Gastrocnemius medialis (tissue), 4 donors: ENCODE measurements at regions of chr18 and their contacts with region 1.

Region 1: DNA sequence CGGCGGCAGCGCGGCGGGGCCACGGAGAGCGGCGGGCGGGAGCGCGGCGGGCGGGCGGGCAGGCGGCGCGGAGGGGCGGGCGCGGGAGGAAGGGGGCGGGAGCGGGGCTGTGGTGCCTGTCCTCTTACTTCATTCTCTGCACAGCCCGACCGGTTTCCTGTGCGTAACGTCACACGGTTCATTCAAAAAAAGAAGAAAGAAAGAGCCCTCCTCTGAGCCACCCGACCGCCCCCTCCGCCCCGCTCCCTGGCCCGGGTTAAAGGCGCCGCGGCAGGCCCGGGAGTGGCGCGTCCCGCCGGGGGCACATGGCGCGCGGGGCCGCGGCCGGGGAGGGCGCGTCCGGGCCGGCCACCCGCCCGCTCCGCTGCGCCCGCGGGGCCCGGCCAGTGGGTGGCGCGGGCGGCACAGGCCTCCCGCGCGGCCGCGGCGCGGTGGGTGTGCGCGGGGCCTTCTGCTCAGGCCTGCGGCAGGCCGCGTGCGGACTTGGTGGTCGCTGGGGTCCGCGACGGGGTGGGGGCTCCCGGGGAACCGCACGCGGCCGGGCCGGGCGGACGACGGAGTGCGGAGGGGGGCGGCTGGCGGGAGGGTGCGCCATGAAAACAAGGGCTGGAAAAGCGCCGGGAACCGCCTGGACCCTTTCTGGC is 599 bp upstream of the BCL2 start:
- DNase-seq: peak; percentile 74 to 81
- ATAC-seq: peak; percentile 77 to 78
- H3K4me3 ChIP-seq: peak overlapping the region; percentile 49 to 81 (median 64)
- H3K27ac ChIP-seq: peak overlapping the region; percentile 83 to 86 (median 84)
- H3K4me1 ChIP-seq: peaks cover 10 to 32% of the 10 kb centered on the region in 2 donors
- H3K27me3 ChIP-seq: no peaks in the 10 kb centered on the region
- CTCF ChIP-seq: peak in 2 of 5 experiments; percentile 29 to 31
- POLR2A ChIP-seq: peak in 1 of 2 donors; percentile 28

Region 2: GRCh38 chr18:63025251-63026090 is 294.7 kb before region 1 on chr18:
- in situ Hi-C with region 1: no loop called
- intact Hi-C with region 1: loop called (anchors 2 kb)
- DNase-seq: no peak
- ATAC-seq: peak; percentile 51 to 52
- H3K4me3 ChIP-seq: no peak overlapping the region
- H3K27ac ChIP-seq: no peak overlapping the region
- H3K4me1 ChIP-seq: no peaks in the 10 kb centered on the region
- H3K27me3 ChIP-seq: no peaks in the 10 kb centered on the region
- CTCF ChIP-seq: peak in 3 of 5 experiments; percentile 13 to 51 (median 39)
- POLR2A ChIP-seq: no peak

Region 3: GRCh38 chr18:63192885-63193349 is 127.3 kb before region 1 on chr18:
- in situ Hi-C with region 1: no loop called
- intact Hi-C with region 1: loop called (anchors 5 kb)
- DNase-seq: peak; percentile 28 to 55
- ATAC-seq: peak; percentile 97 to 98
- H3K4me3 ChIP-seq: no peak overlapping the region
- H3K27ac ChIP-seq: peak overlapping the region; percentile 81 to 90 (median 85)
- H3K4me1 ChIP-seq: peaks cover 29 to 41% of the 10 kb centered on the region in 2 donors
- H3K27me3 ChIP-seq: no peaks in the 10 kb centered on the region
- CTCF ChIP-seq: no peak
- POLR2A ChIP-seq: no peak

Region 4: GRCh38 chr18:63267975-63268721 is 52.0 kb before region 1 on chr18:
- in situ Hi-C with region 1: loop called in 1 of 4 experiments (anchors 10 kb)
- intact Hi-C with region 1: loop called (anchors 2 kb)
- DNase-seq: no peak
- ATAC-seq: no peak
- H3K4me3 ChIP-seq: no peak overlapping the region
- H3K27ac ChIP-seq: no peak overlapping the region
- H3K4me1 ChIP-seq: peaks cover 44 to 52% of the 10 kb centered on the region in 2 donors
- H3K27me3 ChIP-seq: no peaks in the 10 kb centered on the region
- CTCF ChIP-seq: no peak
- POLR2A ChIP-seq: no peak

Region 5: DNA sequence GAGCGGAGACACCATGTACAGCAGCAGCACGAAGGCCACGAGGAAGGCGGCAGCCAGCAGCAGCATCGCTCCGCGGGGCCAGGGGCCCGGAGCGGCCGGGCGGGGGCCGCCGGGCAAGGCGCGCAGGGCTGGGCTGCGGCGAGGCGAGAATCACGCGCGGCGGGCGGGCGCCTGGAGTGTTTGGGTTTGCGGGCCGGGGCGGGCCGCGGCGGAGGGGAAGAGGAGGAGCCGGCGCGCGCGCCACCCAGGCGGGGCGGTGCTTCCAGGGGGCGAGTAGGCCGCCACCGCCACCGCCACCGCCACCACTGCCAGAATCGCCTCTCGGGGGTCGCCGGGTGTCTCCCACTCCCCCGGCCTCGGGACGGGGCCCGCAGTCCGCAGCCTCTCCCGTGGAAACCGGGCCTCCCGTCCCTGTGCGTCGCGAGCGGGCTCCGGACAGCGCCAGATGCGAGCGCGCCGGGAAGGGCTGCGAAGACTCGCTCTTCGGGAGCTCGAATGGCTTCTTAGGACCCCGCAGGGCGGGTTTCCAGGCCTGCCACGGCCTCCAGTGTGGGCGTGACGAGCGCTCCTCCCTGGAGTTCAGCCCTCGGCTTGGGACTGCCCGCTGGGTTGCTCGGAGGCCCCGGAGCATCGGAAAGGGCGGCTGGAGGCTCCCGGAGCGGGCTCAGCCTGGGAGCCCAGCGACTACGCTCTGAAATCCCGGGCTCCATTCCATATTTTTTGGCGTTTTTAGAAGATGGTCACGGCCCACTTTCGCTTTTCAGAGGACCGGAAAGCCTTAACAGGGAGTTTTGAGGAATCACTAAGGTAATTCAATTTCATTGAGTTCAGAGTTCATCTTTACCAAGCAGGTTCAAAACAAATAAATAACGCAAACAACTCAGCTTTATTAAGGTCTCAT is 47.1 kb after region 1 on chr18 and contains the start of gene KDSR:
- in situ Hi-C with region 1: no loop called
- intact Hi-C with region 1: loop called (anchors 2 kb)
- DNase-seq: peak; percentile 85 to 90
- ATAC-seq: peak; percentile 88 to 89
- H3K4me3 ChIP-seq: peak within 1 kb of the TSS; percentile 81 to 95 (median 90)
- H3K27ac ChIP-seq: peak within 1 kb of the TSS; percentile 90 to 99 (median 97)
- H3K4me1 ChIP-seq: peaks cover 19 to 21% of the 10 kb centered on the region in 2 donors
- H3K27me3 ChIP-seq: no peaks in the 10 kb centered on the region
- CTCF ChIP-seq: peak in 2 of 5 experiments; percentile 12 to 26
- POLR2A ChIP-seq: peak; percentile 80 to 87
- total RNA-seq, gene KDSR: 11.2 to 18.6 (median 14.4) TPM